Heart right ventricle (tissue), 16 donors: ENCODE measurements at regions of chr2 and their contacts with region 1.

Region 1: DNA sequence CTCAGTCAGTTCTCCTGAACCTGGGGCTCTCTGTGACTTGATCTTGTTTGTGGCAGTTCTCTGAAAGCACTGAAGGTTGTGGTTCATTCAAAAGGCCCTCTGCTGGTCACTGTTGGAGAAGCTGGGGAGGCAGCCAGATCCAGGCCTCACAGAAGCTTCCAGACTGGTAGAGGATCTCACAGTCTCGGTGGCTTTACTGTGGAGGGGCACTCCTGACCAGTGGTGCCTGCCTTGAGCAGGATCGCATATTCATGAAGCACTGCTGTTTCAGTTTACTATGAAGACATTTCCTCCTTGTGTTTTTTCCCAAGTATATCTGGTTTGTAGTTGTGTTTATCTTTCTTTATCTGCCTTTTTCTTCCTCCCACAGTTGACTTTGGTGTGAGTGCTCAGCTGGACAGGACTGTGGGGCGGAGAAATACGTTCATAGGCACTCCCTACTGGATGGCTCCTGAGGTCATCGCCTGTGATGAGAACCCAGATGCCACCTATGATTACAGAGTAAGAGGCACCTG is 133.9 kb downstream of the MAP4K4 start:
- DNase-seq: peak; percentile 59 to 86
- ATAC-seq: peak; percentile 65 to 89 (median 86)
- H3K4me3 ChIP-seq: no peak overlapping the region
- H3K27ac ChIP-seq: peak overlapping the region in 9 of 10 donors; percentile 8 to 71 (median 62)
- H3K4me1 ChIP-seq: peaks cover 18 to 57% (median 54%) of the 10 kb centered on the region in 9 donors
- H3K27me3 ChIP-seq: no peaks in the 10 kb centered on the region
- CTCF ChIP-seq: peak; percentile 56 to 90 (median 77)

Region 2: DNA sequence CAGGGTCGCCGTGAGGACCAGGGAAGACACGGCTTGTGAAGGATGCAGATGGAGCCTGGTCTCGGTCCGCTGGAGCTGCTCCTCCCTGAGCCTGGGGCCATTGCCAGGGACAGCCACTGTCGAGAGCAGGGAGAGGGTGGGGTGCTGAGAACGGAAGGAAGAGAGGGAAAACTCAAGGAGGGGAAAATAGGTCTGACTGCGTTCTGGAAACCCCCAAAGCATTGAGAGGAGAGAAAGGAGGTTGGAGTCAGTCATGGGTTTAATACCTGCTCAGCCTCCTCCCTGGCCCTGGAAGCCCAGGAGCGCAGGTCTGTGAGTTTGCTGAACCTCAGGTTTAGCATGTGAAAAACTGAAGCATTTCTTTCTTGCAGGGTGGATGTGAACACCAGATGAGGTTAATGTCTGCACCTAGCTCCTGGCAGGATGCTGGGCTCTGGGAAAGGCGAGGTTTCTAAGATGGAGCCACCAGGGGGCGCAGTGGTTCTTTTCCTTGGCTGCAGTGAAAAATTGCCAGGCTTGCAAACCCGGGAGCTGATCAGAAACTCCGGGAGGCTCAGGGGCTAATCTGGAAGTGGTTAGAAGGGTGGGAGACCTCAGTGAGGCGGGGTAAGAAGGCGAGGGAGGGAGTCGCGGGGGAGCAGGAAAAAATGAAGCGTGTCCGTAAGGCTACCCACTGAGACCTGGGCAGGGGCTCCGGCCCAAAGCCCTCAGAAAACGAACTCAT is 489.3 kb before region 1 on chr2:
- intact Hi-C with region 1: loop called in 6 of 10 experiments (anchors 2 to 5 kb)
- DNase-seq: peak; percentile 68 to 77
- ATAC-seq: peak in 7 of 8 donors; percentile 61 to 83 (median 79)
- H3K4me3 ChIP-seq: no peak overlapping the region
- H3K27ac ChIP-seq: no peak overlapping the region
- H3K4me1 ChIP-seq: peaks cover 0 to 31% (median 0%) of the 10 kb centered on the region in 9 donors
- H3K27me3 ChIP-seq: no peaks in the 10 kb centered on the region
- CTCF ChIP-seq: peak; percentile 70 to 90 (median 81)

Region 3: GRCh38 chr2:101419096-101419663 is 412.2 kb before region 1 on chr2:
- intact Hi-C with region 1: loop called (anchors 2 to 10 kb)
- DNase-seq: peak in 1 of 2 donors; percentile 79
- ATAC-seq: peak; percentile 70 to 91 (median 82)
- H3K4me3 ChIP-seq: no peak overlapping the region
- H3K27ac ChIP-seq: no peak overlapping the region
- H3K4me1 ChIP-seq: peaks cover 0 to 7% (median 0%) of the 10 kb centered on the region in 9 donors
- H3K27me3 ChIP-seq: peaks cover 0 to 6% (median 0%) of the 10 kb centered on the region in 7 donors
- CTCF ChIP-seq: peak; percentile 71 to 87 (median 82)

Region 4: GRCh38 chr2:101518578-101519492 is 312.6 kb before region 1 on chr2:
- intact Hi-C with region 1: loop called (anchors 1 to 10 kb)
- DNase-seq: peak; percentile 39 to 66
- ATAC-seq: peak; percentile 68 to 83 (median 79)
- H3K4me3 ChIP-seq: peak overlapping the region in 2 of 10 donors; percentile 21 to 24
- H3K27ac ChIP-seq: peak overlapping the region in 6 of 10 donors; percentile 5 to 64 (median 30)
- H3K4me1 ChIP-seq: peaks cover 0 to 55% (median 30%) of the 10 kb centered on the region in 9 donors
- H3K27me3 ChIP-seq: peaks cover 0 to 22% (median 0%) of the 10 kb centered on the region in 7 donors
- CTCF ChIP-seq: peak in 8 of 9 donors; percentile 22 to 71 (median 50)

Region 5: DNA sequence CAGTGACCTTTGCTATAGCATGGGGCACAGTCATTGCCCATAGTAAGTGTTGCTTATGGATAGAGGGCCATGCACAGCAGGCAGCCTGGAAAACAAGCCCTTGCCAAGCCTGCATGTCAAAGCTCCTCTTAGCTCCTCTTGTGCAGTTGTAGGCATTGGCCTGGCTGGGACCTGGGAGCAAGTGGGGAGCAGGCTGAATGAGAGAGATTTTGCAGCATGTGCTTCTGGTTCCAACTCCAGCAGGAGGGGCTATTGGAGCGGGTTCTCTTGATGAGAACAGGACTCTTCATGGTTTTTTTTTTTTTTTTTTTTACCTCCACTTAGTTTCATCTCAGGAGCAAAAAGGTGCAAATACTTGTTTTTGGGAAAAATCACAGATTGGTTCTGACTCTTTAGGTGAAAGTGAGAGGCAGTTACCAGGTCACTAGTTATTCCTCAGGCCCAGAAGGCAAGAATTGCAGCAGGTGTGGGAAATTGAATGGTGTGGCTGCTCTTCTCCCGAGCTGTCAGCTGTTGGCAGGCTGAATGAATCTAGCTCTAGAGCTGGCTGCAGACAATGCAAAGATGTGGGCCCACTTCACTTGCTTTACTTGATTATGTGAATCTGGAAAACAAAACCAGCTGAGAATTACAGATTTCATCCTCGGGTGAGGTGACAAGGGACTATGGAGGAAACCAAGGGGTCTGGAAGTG is 38.0 kb before region 1 on chr2:
- intact Hi-C with region 1: loop called in 2 of 10 experiments (anchors 5 kb)
- DNase-seq: peak in 1 of 2 donors; percentile 48
- ATAC-seq: peak in 5 of 8 donors; percentile 31 to 57 (median 41)
- H3K4me3 ChIP-seq: no peak overlapping the region
- H3K27ac ChIP-seq: peak overlapping the region in 4 of 10 donors; percentile 7 to 58 (median 26)
- H3K4me1 ChIP-seq: peaks cover 5 to 100% (median 77%) of the 10 kb centered on the region in 9 donors
- H3K27me3 ChIP-seq: no peaks in the 10 kb centered on the region
- CTCF ChIP-seq: peak in 7 of 9 donors; percentile 19 to 58 (median 31)